ENCODE measurements at regions of chr2 and their contacts with region 1.

Region 1: GRCh38 chr2:236576087-236576486 is 6.5 kb downstream of the ACKR3 start:
- DNase-seq: no peak
- ATAC-seq: peak in 3 of 8 donors; percentile 6 to 16 (median 8)
- H3K4me3 ChIP-seq: no peak overlapping the region
- H3K27ac ChIP-seq: peak overlapping the region in 5 of 10 donors; percentile 51 to 76 (median 70)
- H3K4me1 ChIP-seq: peaks cover 6 to 88% (median 64%) of the 10 kb centered on the region in 9 donors
- H3K27me3 ChIP-seq: no peaks in the 10 kb centered on the region
- CTCF ChIP-seq: peak in 2 of 9 donors; percentile 15 to 22

Region 2: DNA sequence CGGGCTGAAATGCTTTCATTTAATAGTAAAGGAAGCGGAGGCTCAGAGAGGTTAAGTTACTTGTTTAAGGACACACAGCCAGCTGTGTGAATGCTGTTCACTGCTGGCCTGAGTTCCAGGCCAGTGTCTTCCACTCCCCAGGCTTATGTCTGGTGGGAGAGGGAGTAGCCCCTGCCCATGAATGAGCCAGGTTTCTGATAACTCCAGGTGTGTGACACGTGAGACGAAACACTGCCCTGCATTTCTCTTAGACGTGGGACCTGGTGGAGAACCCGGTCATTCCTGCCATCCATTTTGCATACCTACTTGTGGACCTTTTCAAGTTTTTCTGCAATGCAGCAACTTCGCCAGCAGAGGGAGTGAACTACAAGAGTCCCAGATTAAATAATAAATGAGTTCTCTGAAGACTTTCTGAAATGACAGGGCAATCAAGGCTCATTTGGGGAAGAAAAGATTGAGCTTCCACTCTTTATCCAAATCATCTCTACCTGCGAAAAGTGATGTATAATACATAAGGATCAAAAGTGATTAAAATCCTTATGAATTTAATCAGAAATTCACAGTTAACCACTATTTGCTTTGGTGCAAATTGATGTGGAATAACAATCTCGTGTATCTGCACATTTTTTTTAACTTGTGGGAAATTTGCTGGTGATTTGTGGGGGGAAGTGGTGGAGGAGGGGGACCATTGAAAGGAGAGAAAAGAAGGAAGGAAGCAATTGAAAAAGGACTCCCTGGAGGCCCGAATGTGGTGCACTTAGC is 232.5 kb before region 1 on chr2:
- intact Hi-C with region 1: loop called in 1 of 10 experiments (anchors 10 kb)
- DNase-seq: peak in 1 of 2 donors; percentile 51
- ATAC-seq: peak in 1 of 8 donors; percentile 21
- H3K4me3 ChIP-seq: no peak overlapping the region
- H3K27ac ChIP-seq: peak overlapping the region in 1 of 10 donors; percentile 76
- H3K4me1 ChIP-seq: peaks cover 0 to 50% (median 10%) of the 10 kb centered on the region in 9 donors
- H3K27me3 ChIP-seq: no peaks in the 10 kb centered on the region
- CTCF ChIP-seq: peak; percentile 73 to 91 (median 83)

Region 3: DNA sequence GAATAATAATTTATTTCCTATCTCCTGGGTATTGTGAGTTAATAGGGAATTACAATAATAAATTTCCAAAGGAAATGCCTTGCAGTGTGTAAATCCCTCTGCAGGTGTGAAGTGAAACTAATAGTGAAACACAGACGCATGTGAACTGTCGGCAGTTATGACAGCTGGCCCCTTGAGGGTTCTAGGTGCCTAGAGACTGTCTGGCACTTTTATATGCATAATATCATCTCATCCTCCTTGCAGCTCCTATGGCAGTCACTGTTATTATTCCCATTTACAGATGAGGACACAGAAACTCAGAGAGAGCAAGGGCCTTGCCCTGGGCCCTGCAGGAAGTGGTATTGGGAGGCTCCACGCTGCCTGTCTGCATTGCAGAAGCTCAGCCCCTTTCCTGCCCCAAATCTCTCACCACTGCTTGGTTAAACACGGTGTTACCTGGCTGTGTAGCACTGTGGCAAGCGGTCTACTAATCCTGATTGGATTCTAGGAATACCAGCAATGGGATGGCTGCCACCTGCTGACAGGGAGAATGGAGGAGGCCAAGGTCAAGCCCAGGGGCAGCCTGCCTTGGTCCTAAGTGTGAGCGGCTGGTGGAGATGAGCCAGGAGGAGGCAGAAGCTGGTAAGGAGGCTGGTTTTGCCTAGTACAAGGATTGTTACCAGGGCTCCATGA is 39.2 kb before region 1 on chr2:
- intact Hi-C with region 1: no loop called
- DNase-seq: no peak
- ATAC-seq: peak in 1 of 8 donors; percentile 29
- H3K4me3 ChIP-seq: peak overlapping the region in 1 of 10 donors; percentile 30
- H3K27ac ChIP-seq: peak overlapping the region in 1 of 10 donors; percentile 32
- H3K4me1 ChIP-seq: peaks cover 0 to 14% (median 0%) of the 10 kb centered on the region in 9 donors
- H3K27me3 ChIP-seq: no peaks in the 10 kb centered on the region
- CTCF ChIP-seq: no peak

Region 4: GRCh38 chr2:236562434-236562833 is 13.7 kb before region 1 on chr2:
- intact Hi-C with region 1: no loop called
- DNase-seq: no peak
- ATAC-seq: peak in 2 of 8 donors; percentile 48 to 54
- H3K4me3 ChIP-seq: no peak overlapping the region
- H3K27ac ChIP-seq: no peak overlapping the region
- H3K4me1 ChIP-seq: peaks cover 0 to 12% (median 7%) of the 10 kb centered on the region in 9 donors
- H3K27me3 ChIP-seq: peaks cover 0 to 5% (median 0%) of the 10 kb centered on the region in 7 donors
- CTCF ChIP-seq: peak; percentile 27 to 79 (median 67)

Region 5: DNA sequence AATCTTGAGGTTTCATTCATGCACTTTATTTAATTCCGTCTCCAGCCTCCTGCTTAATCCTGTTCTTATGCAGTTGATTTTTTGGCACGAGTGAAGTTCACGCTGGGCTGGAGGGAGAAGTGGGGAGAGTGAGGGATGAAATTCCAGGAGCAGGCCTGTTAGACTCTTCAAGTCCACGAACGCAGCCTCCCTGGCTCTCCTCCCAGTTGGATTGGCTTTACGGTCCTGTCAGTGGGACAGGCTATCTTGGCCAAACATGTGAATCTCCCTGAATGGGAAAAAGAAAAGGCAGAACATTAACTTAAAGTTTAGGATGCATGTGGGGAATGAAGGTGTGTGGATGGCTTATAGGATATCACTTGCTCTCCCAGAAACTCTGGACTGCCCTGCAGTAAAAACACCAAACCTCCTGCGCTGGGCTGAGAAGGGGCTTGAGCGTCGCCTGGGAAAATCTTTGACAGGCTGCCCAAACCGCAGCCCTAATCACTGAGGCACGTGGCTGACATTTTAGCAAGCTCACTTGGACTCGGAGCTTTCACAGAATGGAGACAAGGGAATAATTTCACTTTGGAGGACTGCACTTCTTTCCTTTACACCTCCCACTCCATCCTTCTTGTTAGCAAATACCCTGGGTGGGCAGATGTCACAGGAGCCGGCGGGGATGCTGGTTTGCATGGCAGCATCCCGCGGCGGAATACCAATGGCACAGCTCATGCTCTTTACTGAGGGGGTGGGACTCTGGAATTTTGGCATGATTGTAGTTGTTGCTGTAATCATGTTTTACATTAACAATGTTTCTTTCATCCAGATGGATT is 87.4 kb after region 1 on chr2:
- intact Hi-C with region 1: loop called in 1 of 10 experiments (anchors 10 kb)
- DNase-seq: peak; percentile 68 to 77
- ATAC-seq: peak; percentile 54 to 81 (median 63)
- H3K4me3 ChIP-seq: no peak overlapping the region
- H3K27ac ChIP-seq: peak overlapping the region in 9 of 10 donors; percentile 35 to 85 (median 59)
- H3K4me1 ChIP-seq: peaks cover 5 to 50% (median 43%) of the 10 kb centered on the region in 9 donors
- H3K27me3 ChIP-seq: no peaks in the 10 kb centered on the region
- CTCF ChIP-seq: no peak

Region 6: DNA sequence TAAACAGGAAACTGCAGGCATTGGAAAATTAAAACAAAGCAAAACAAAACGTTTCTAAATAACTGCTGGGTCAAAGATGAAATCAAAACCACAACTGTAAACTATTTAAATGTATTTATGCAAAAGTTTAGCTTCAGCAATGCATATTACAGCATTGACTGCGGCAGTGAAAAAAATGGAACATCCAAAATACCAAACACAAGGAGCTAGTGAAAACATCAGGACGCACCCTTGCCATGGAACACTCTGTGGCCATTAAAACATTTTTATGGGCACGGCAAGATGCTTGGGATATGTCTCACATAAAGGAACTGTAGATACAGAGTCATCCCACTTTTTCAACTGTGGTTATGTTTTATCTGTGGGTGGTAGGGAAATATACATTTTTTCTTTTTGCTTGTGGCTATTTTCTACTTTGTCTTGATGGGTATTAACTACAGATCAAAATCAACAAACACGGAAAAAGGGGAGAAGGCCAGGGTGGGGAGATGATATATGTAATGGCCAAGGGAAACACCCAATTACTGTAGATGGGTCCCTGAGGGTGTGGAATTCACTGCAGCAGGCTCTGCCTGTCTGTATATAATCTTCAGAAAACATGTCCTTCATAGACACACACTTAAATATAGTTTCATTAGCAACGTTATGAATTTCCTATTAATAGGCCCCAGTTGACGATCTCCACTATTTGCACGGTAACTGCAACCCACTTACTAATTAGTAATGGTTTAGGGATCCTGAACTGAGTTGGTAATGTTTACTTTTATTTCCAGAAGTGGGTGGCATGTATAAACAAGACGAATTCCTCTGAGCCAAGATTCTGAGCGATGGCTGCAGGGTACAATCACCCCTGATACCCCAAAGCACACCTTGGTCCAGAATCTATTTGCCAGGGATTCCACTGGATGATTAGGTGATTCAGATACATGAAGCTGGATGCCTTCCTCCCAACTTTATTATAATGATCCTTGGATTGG is 104.1 kb after region 1 on chr2:
- intact Hi-C with region 1: loop called in 4 of 10 experiments (anchors 5 to 10 kb)
- DNase-seq: no peak
- ATAC-seq: no peak
- H3K4me3 ChIP-seq: no peak overlapping the region
- H3K27ac ChIP-seq: no peak overlapping the region
- H3K4me1 ChIP-seq: peaks cover 0 to 45% (median 15%) of the 10 kb centered on the region in 9 donors
- H3K27me3 ChIP-seq: peaks cover 0 to under 1% (median 0%) of the 10 kb centered on the region in 7 donors
- CTCF ChIP-seq: no peak

Region 7: GRCh38 chr2:236731878-236732580 is 155.9 kb after region 1 on chr2:
- intact Hi-C with region 1: loop called in 2 of 10 experiments (anchors 10 kb)
- DNase-seq: peak; percentile 61 to 83
- ATAC-seq: peak; percentile 92 to 96 (median 94)
- H3K4me3 ChIP-seq: no peak overlapping the region
- H3K27ac ChIP-seq: peak overlapping the region in 9 of 10 donors; percentile 40 to 87 (median 75)
- H3K4me1 ChIP-seq: peaks cover 10 to 32% (median 29%) of the 10 kb centered on the region in 9 donors
- H3K27me3 ChIP-seq: peaks cover 0 to 11% (median 0%) of the 10 kb centered on the region in 7 donors
- CTCF ChIP-seq: peak in 3 of 9 donors; percentile 13 to 20 (median 17)

Region 8: GRCh38 chr2:236871500-236872001 is 295.5 kb after region 1 on chr2:
- intact Hi-C with region 1: loop called in 1 of 10 experiments (anchors 10 kb)
- DNase-seq: peak in 1 of 2 donors; percentile 56
- ATAC-seq: peak; percentile 64 to 89 (median 80)
- H3K4me3 ChIP-seq: no peak overlapping the region
- H3K27ac ChIP-seq: peak overlapping the region in 5 of 10 donors; percentile 35 to 88 (median 38)
- H3K4me1 ChIP-seq: peaks cover 0 to 52% (median 6%) of the 10 kb centered on the region in 9 donors
- H3K27me3 ChIP-seq: no peaks in the 10 kb centered on the region
- CTCF ChIP-seq: no peak